ENCODE measurements at regions of chr9 and their contacts with region 1.

Region 1: DNA sequence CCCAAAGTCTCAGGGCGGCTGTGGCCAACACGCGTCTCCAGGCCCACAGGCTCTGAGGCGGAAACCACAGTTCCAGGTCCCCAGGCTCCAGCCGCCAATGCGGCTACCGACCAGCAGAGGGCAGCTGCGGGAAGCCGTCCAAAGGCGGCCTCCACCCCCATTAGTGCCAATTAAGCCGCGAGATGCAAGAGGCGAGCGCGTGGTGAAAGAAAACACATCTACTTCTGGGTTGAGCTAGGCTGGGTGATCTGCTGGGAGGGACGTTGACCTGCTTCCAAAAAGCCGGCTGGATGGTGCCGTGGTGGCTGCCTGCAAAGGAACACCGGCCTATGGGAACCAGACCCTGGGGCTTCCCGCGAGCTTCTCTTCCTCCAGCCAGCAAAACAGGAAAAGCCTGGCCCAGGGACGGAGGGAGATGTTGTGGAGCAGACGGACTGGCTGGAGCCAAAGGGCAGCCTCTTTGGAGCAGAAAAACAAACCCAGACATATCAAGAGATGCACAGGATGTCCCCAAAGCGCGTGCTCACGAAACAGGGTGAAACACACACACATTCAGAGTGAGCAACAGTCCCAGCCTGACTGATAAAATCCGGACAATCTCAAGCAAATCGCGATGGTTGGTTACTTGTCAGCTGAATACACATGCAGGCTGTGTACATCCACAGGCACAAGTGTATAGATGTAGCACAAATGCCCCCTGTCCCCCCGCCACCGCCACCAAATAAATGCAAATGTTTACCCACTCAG is 187.1 kb upstream of the BRINP1 start:
- DNase-seq: no peak
- ATAC-seq: peak; percentile 84
- H3K4me3 ChIP-seq: no peak overlapping the region
- H3K27ac ChIP-seq: no peak overlapping the region
- H3K4me1 ChIP-seq: no peaks in the 10 kb centered on the region
- H3K27me3 ChIP-seq: no peaks in the 10 kb centered on the region
- CTCF ChIP-seq: peak; percentile 15 to 83 (median 80); a peak in 4 of 6 replicates
- POLR2A ChIP-seq: no peak
- RAD21 ChIP-seq: peak; percentile 44

Region 2: GRCh38 chr9:119533504-119533903 is 22.8 kb before region 1 on chr9:
- CTCF ChIA-PET with region 1: no interaction called
- POLR2A ChIA-PET with region 1: no interaction called
- RAD21 ChIA-PET with region 1: no interaction called
- intact Hi-C with region 1: no loop called
- DNase-seq: no peak
- ATAC-seq: no peak
- H3K4me3 ChIP-seq: no peak overlapping the region
- H3K27ac ChIP-seq: no peak overlapping the region
- H3K4me1 ChIP-seq: no peaks in the 10 kb centered on the region
- H3K27me3 ChIP-seq: no peaks in the 10 kb centered on the region
- CTCF ChIP-seq: no peak
- POLR2A ChIP-seq: no peak
- RAD21 ChIP-seq: no peak

Region 3: GRCh38 chr9:120348951-120349429 is 792.7 kb after region 1 on chr9:
- CTCF ChIA-PET with region 1: no interaction called
- POLR2A ChIA-PET with region 1: no interaction called
- RAD21 ChIA-PET with region 1: no interaction called
- intact Hi-C with region 1: loop called (anchors 2 kb)
- DNase-seq: peak; percentile 31
- ATAC-seq: peak; percentile 92
- H3K4me3 ChIP-seq: no peak overlapping the region
- H3K27ac ChIP-seq: no peak overlapping the region
- H3K4me1 ChIP-seq: peaks cover 5 to 8% of the 10 kb centered on the region in 2 experiments
- H3K27me3 ChIP-seq: no peaks in the 10 kb centered on the region
- CTCF ChIP-seq: peak; percentile 42 to 83 (median 71); a peak in 5 of 6 replicates
- POLR2A ChIP-seq: no peak
- RAD21 ChIP-seq: peak; percentile 84

Region 4: DNA sequence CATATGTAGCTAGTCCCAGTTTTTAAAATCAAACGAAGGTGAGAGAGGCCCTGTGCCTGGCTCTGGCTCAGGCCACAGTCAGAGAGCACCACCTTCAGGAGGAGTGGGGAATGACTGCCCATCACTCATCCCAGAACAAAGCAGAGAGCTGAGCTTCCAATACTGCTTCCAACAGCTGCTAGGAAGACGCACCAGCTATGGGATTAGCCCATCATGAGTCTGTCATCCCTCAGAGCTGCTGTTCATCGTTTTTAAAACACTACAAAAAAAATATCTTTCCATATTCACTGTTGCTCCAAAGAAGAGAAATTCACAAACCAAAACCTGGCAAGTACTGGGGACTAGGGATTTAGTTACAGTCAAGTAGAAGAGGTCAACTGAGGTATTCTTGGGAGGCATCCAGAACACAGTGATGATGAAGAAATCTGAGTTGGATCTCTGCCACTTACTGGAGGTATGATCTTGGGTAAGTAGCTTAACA is 921.3 kb after region 1 on chr9:
- CTCF ChIA-PET with region 1: no interaction called
- POLR2A ChIA-PET with region 1: no interaction called
- RAD21 ChIA-PET with region 1: no interaction called
- intact Hi-C with region 1: loop called (anchors 5 kb)
- DNase-seq: peak; percentile 8
- ATAC-seq: peak; percentile 94
- H3K4me3 ChIP-seq: no peak overlapping the region
- H3K27ac ChIP-seq: no peak overlapping the region
- H3K4me1 ChIP-seq: no peaks in the 10 kb centered on the region
- H3K27me3 ChIP-seq: no peaks in the 10 kb centered on the region
- CTCF ChIP-seq: peak; percentile 19 to 88 (median 87); a peak in 4 of 6 replicates
- POLR2A ChIP-seq: no peak
- RAD21 ChIP-seq: peak; percentile 71

Measured in HCT116 (cell line).